PC-9 (cell line): ENCODE measurements at regions of chr7 and their contacts with region 1.

Region 1: GRCh38 chr7:155918714-155919399 is 106.6 kb upstream of the SHH start:
- DNase-seq: peak; percentile 86 to 99
- H3K4me3 ChIP-seq: no peak overlapping the region
- H3K27ac ChIP-seq: peak overlapping the region; percentile 67
- H3K4me1 ChIP-seq: peaks cover 56% of the 10 kb centered on the region
- H3K27me3 ChIP-seq: no peaks in the 10 kb centered on the region
- CTCF ChIP-seq: no peak

Region 2: GRCh38 chr7:155844019-155844453 is 74.8 kb before region 1 on chr7:
- CTCF ChIA-PET with region 1: no interaction called
- POLR2A ChIA-PET with region 1: no interaction called
- intact Hi-C with region 1: loop called (anchors 1 kb)
- DNase-seq: peak; percentile 66 to 84
- H3K4me3 ChIP-seq: no peak overlapping the region
- H3K27ac ChIP-seq: no peak overlapping the region
- H3K4me1 ChIP-seq: peaks cover 12% of the 10 kb centered on the region
- H3K27me3 ChIP-seq: no peaks in the 10 kb centered on the region
- CTCF ChIP-seq: peak; percentile 47; the same call in 1 of the 2 replicates